Activated T-helper 1 cell treated with anti-CD3 and anti-CD28 coated beads, Interleukin-12 subunit alpha, Interleukin-12 subunit beta, Interleukin-2, Interleukin-4 antibody, amounts not matched to agents 30 ng/mL and 10 ng/mL and 1 ng/mL, durations not matched to agents 14 hours and 24 hours and 36 hours (primary cell): ENCODE measurements at regions of chr11 and their contacts with region 1.

Region 1: DNA sequence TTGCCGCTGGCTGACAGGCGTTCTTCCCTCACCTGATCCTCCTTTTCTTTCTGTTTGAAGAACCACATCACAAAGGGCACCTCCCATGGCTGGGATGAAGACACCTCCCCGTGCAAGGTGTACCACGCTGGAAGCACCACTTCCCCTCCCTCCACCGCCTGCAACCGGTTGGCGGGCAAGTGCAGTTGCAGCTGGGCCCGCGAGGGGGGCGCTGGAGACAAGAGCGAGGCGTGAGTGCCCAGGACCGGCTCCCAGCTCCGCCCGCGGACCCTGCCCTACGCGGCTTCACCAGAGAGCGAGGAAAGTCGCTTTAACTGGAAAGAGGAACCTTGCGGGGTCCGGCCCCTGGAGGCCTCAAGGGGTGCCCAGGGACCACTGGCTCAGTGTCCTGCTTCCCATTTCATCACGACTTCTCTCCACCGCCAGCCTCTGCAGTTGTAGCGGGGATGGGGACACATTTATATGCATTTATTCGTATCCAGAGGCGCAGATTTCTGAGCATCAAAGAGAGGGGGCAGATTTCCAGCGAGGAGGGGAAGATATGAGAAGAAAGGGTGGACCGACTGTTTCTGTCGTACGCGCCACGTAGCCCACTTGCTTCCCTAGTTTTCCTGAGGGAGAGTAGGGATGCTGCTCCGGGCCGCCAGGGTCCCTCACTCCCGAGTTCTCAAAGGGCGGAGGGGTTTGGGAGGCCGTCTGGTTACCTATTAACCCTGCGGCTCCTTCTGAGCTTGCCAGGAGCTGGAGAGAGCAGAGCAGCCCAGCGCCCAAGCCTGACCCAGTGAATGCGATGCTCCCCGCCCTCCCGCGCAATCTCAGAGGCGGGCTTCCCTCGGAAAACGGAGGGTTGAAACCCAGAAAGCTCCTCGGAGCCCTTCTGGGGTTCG is 3.5 kb downstream of the ESAM start:
- DNase-seq: peak; percentile 59
- H3K4me3 Mint-ChIP-seq: peak overlapping the region; percentile 61
- H3K27ac Mint-ChIP-seq: no peak overlapping the region
- H3K4me1 Mint-ChIP-seq: peaks cover 19% of the 10 kb centered on the region
- H3K27me3 Mint-ChIP-seq: peaks cover 57% of the 10 kb centered on the region

Region 2: GRCh38 chr11:124622531-124623451 is 135.8 kb before region 1 on chr11 and contains the start of gene TBRG1:
- intact Hi-C with region 1: loop called (anchors 2 kb)
- DNase-seq: peak; percentile 80
- H3K4me3 Mint-ChIP-seq: peak within 1 kb of the TSS; percentile 97
- H3K27ac Mint-ChIP-seq: peak within 1 kb of the TSS; percentile 95
- H3K4me1 Mint-ChIP-seq: peaks cover 29% of the 10 kb centered on the region
- H3K27me3 Mint-ChIP-seq: peaks cover 14% of the 10 kb centered on the region
- total RNA-seq, gene TBRG1: 35.1 and 35.4 TPM in 2 replicates

Region 3: DNA sequence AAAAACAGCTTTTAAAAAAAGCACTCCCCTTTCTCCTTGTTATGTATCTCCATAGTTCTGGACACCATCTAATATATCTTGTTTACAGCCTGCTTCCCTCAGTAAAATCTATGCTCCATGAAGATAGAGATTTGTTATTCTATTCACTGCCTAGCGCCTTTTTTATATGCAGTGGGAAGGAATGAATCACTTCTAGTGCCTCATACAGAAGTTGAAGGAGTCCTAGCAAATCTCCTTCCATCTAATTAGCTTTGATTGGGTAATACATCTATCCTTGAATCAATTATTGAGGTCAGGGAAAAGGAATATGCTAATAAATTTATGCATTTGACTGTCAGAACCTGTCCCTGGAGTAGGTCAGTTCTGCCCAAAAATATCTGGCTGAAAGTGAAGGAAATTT is 59.0 kb before region 1 on chr11:
- intact Hi-C with region 1: no loop called
- DNase-seq: no peak
- H3K4me3 Mint-ChIP-seq: no peak overlapping the region
- H3K27ac Mint-ChIP-seq: no peak overlapping the region
- H3K4me1 Mint-ChIP-seq: no peaks in the 10 kb centered on the region
- H3K27me3 Mint-ChIP-seq: peaks cover 8% of the 10 kb centered on the region

Region 4: DNA sequence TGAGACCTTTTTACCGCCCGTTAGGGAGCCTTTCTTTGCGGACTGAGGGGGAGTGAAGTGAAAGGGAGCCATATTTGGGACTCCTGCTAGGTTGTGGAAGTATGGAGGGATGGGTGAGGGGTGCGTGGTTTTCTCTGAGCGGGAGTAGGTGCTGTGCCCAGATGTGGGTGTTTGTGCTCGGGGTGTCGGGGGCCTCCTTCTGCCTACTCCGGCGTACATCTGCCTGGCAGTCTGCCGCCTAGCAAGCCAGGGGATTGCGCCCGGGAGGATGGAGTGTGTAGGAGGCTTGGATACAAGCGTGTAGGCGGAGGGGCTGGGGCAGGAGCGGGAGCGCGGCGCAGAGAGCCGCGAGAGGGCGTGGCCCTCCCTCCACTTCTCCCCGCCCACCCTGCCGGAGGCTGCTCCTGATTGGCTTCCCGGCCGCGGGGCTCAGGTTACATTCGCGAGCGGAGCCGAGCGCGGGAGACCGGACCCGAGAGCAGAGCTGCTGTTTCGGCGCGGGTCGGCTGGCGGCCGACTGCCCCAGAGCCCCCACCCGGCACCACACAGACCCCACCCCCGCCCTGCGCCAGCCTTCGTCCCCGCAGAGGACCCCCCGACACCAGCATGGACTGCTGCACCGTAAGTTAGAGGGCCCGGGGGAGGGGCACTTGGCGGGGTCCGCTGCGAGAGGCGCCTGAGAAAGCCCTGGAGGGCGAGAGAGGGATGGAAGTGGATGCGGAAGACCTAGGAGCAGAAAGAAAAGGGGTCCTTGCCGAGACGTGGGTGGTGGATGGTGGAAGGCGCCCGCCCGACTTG is 18.9 kb before region 1 on chr11 and contains the start of gene NRGN:
- intact Hi-C with region 1: loop called (anchors 1 kb)
- DNase-seq: peak; percentile 80
- H3K4me3 Mint-ChIP-seq: peak within 1 kb of the TSS; percentile 85
- H3K27ac Mint-ChIP-seq: peak within 1 kb of the TSS; percentile 54
- H3K4me1 Mint-ChIP-seq: peaks cover 25% of the 10 kb centered on the region
- H3K27me3 Mint-ChIP-seq: peaks cover 38% of the 10 kb centered on the region
- total RNA-seq, gene NRGN: 3.9 and 6.1 TPM in 2 replicates

Region 5: DNA sequence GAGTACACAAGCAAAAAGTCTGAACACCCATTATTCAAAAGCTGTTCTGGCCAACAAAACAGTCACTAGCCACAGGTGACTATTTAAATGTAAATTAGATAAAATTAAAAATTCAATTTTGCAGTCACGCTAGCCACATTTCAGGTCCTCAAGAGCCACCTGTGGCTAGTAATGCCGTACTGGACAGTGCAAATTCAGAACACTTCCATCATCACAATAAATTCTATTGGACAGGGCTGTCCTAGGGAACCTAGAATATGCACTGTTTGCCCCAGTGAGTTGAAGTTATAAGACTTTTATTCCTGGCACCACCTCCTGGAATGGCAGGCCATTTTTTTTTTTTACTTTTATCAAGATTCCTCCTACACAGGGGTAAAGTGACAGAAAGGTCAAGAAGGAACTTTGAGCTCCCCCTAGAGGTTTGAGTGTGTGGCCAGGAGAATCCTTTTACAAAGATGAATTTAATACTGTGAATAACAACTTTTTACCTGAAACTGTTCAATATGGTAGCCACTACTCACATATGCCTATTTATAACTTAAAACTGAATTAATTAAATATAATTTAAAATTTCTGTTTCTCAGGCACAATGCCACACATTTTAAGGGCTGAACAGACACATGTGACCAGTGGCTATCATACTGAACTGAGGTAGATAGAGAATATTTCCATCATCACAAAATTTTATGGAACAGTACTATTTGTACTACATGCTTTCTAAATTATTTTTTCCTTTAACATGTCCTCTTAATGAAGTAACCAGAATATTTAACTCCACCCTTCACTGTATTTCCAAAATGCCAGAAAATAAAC is 35.1 kb after region 1 on chr11:
- intact Hi-C with region 1: loop called (anchors 1 kb)
- DNase-seq: peak; percentile 3
- H3K4me3 Mint-ChIP-seq: no peak overlapping the region
- H3K27ac Mint-ChIP-seq: no peak overlapping the region
- H3K4me1 Mint-ChIP-seq: peaks cover 36% of the 10 kb centered on the region
- H3K27me3 Mint-ChIP-seq: no peaks in the 10 kb centered on the region

Region 6: DNA sequence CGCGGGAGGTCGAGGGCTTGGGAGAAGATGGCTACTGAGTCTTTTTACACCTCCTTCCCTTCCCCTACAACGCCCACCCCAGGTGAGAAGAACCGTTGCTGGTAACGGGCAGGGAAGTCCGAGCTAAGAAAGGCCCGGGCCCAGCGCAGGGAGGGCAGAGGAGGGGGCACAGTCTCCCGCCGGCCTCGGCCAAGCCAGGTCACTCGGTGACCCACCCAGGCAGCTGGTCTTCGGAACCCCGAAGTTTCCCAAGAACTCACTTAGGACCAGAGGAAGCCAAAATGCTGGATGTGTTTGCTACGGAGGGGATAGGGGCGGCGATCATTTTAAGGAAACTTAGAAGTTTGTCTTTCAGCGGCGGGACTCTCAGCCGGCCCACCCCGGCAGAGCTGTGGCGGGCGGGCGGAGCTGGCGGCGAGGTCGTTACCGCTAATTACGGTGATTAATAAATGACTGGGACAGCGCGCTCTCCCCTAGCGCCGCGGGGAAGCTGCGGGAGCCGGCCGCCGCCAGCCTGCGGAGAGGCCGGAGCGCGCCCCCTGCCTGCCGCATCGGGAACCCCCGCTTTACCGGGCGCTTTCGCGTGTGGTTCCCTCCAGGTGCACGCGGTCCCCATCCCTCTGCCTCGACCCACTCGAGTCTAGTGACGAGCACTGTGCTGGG is 107.5 kb after region 1 on chr11:
- intact Hi-C with region 1: loop called (anchors 2 kb)
- DNase-seq: peak; percentile 28
- H3K4me3 Mint-ChIP-seq: no peak overlapping the region
- H3K27ac Mint-ChIP-seq: no peak overlapping the region
- H3K4me1 Mint-ChIP-seq: peaks cover 16% of the 10 kb centered on the region
- H3K27me3 Mint-ChIP-seq: peaks cover 88% of the 10 kb centered on the region